ENCODE measurements at regions of chr19 and their contacts with region 1.

Region 1: DNA sequence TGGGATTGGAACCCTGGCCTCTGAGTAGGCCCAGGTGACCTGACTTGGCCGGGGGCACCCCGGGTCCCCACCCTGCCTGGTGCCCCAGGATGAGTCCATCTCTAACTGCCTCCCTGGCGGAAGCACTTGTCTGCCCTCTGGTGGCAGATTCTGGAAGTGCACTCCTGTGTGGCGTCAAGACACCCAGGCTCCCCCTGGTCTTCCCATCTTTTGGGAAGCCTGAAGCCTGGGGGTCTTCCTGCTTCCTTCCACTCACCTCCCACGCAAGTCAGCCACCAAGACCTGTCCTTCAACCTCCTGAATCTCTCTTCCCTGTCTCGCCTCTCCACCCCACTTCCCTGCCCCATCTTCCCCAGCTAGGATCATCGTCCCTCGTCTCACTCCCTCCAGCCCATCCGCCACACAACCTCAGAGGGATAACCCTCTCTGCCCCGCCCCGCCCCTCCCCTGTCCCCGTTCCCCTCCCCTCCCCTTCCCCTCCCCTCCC is 7.4 kb downstream of the RABAC1 start:
- DNase-seq: peak; percentile 63 to 93 (median 78)
- ATAC-seq: peak; percentile 95
- H3K4me3 ChIP-seq: no peak overlapping the region
- H3K4me3 Mint-ChIP-seq: peak overlapping the region in 2 of 10 donors; percentile 54 to 67
- H3K27ac ChIP-seq: peak overlapping the region; percentile 15
- H3K27ac Mint-ChIP-seq: peak overlapping the region in 8 of 9 donors; percentile 48 to 89 (median 63)
- H3K4me1 ChIP-seq: peaks cover 0 to 15% of the 10 kb centered on the region in 2 donors
- H3K4me1 Mint-ChIP-seq: peaks cover 11 to 19% (median 12%) of the 10 kb centered on the region in 7 donors
- H3K27me3 ChIP-seq: no peaks in the 10 kb centered on the region
- H3K27me3 Mint-ChIP-seq: no peaks in the 10 kb centered on the region

Region 2: DNA sequence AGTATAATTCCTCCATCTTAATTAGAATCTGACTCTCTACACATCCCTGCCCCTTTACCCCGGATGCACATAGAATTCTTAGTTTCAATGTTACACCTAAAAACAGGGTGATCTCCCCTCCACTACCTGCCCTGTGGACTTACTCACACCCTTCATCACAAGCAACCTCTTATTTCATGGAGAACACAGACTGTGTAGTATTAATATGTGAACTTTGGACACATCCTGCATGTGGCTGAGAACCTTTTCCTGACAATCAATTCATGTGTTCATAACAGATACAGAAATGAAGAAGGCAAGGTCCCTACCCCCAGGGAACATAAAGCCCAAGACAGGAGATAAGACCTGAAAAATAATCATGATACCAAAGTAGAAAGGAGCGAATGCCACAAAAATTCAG is 184.6 kb before region 1 on chr19:
- CTCF ChIA-PET with region 1: no interaction called
- POLR2A ChIA-PET with region 1: no interaction called
- intact Hi-C with region 1: no loop called
- DNase-seq: no peak
- ATAC-seq: no peak
- H3K4me3 ChIP-seq: no peak overlapping the region
- H3K4me3 Mint-ChIP-seq: no peak overlapping the region
- H3K27ac ChIP-seq: no peak overlapping the region
- H3K27ac Mint-ChIP-seq: no peak overlapping the region
- H3K4me1 ChIP-seq: peaks cover 0 to 3% of the 10 kb centered on the region in 2 donors
- H3K4me1 Mint-ChIP-seq: peaks cover under 1 to 7% (median 7%) of the 10 kb centered on the region in 7 donors
- H3K27me3 ChIP-seq: peaks cover 0 to 7% of the 10 kb centered on the region in 2 donors
- H3K27me3 Mint-ChIP-seq: peaks cover 29 to 58% (median 49%) of the 10 kb centered on the region in 5 donors

Region 3: DNA sequence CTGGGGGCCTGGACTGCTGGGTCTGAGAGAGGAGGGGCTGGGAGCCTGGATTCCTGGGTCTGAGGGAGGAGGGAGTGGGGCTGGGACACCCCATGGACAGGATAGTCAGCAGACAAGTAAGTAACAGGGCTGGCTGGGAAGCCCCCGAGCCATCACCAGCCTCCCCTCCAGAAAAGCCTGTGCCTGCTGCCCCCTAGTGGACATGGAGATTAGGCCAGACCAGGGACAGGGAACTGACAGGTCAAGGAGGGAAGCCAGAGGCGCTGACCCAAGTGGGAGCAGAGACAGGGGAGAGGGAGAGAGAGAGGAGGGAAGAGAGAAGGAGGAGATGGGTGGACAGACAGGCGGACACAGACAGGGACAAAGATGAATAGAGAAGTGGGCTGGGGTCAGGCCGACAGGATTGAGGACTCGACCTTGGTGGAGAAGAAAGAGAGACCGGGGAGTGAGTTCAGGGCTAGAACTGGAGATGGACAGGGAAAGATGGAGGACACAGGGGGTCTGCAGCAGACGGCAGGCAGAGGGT is 16.8 kb before region 1 on chr19:
- CTCF ChIA-PET with region 1: interaction called, 7 read pairs
- POLR2A ChIA-PET with region 1: interaction called, 4 read pairs
- intact Hi-C with region 1: loop called in 1 of 2 experiments (anchors 1 kb)
- DNase-seq: peak; percentile 47 to 78 (median 67)
- ATAC-seq: peak; percentile 83
- H3K4me3 ChIP-seq: no peak overlapping the region
- H3K4me3 Mint-ChIP-seq: peak overlapping the region in 4 of 10 donors; percentile 30 to 66 (median 33)
- H3K27ac ChIP-seq: peak overlapping the region; percentile 40
- H3K27ac Mint-ChIP-seq: peak overlapping the region; percentile 46 to 88 (median 81)
- H3K4me1 ChIP-seq: peaks cover 26 to 29% of the 10 kb centered on the region in 2 donors
- H3K4me1 Mint-ChIP-seq: peaks cover 37 to 63% (median 48%) of the 10 kb centered on the region in 7 donors
- H3K27me3 ChIP-seq: peaks cover 0 to 4% of the 10 kb centered on the region in 2 donors
- H3K27me3 Mint-ChIP-seq: peaks cover 0 to 24% (median 0%) of the 10 kb centered on the region in 5 donors

Measured in naive thymus-derived CD4-positive, alpha-beta T cell (primary cell).